ENCODE measurements at regions of chr20 and their contacts with region 1.

Region 1: DNA sequence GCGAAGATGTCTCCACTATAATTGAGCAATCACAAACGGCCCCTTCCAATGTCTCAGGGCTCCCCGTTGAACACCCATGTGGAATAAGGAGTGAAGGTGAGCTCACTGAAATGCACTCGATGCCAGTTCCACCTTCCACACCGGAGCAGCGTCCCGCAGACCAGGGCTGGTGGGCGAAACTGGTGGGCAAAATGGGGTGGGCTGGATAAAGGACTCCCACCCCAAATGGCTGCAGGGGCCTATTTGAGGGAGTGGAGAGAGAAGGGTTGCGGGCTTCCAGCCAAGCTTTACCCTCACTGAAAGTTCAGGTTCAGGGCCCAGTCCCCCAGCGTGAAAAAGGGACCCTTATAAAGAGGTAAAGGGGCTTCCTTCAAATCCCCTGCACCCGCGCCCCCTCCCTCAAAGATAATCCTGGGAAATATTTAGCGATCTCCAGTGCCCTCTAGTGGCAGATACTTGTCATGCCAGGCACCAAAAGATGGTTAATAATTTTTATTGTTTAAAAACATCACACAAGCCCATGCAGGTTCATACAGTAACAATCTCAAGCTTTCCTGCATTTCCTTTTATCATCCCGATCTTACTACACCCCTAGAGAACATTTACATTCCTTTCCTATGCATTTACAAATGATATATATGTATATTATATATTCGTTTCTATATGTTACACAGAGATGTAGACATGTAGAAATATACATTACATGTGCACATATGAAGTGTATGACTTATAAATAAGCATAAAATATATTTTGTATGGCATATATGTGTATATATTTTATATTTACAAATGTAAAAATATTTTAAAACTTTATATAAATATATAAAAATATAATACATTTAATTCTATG is 58.2 kb upstream of the NKX2-2 start:
- DNase-seq: peak in 2 of 5 donors; percentile 15 to 26
- H3K4me3 ChIP-seq: no peak overlapping the region
- H3K4me3 Mint-ChIP-seq: no peak overlapping the region
- H3K27ac ChIP-seq: no peak overlapping the region
- H3K27ac Mint-ChIP-seq: no peak overlapping the region
- H3K4me1 ChIP-seq: peaks cover 15% of the 10 kb centered on the region
- H3K4me1 Mint-ChIP-seq: peaks cover 2 to 13% (median 8%) of the 10 kb centered on the region in 4 donors
- H3K27me3 ChIP-seq: no peaks in the 10 kb centered on the region
- H3K27me3 Mint-ChIP-seq: peaks cover 1 to 10% of the 10 kb centered on the region in 2 donors

Region 2: DNA sequence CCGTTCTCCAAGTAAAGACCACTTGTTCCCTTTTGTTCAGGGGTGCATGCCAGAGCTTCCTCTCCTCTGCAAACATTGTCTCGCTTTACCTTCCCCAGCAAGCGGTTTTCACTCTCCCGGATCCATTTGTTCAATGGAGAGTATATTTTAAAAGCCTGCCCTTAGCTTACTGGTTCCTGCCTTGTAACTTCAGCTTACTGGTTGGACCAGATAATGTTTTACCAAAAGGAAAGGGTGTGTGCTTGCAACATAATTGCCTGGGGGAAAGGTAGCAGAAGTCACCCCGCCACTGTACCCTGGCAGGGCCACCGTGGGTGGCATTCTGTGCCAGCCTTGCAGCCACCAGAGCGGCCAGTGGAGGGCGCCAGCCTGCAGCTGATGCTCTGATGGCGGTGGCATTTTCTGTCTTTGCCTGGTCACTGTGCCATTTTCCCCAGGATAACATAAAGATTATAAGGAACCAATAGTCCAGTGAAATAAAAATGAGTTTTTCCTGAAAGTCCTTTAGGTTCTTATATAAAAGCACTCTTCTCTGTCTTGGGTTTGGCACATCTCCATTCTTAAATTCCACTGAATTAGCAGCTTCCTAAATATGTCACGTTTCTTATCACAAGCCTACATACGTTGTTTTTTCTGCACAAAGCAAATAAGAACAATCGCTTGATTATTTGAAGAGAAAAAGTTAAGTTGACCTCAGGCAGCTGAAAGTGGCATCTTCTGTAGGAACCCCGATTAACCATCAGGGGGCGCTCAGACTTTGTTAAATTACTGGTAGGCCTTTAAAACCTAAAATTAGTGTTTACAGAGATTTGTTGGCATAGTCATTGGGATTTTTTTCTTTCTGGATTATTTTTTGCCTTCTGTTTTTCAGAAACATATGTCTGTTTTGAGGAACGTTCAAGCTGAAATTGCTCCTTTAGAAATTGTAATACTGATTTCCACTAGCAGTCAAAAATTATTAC is 336.3 kb before region 1 on chr20:
- CTCF ChIA-PET with region 1: interaction called, 46 read pairs
- POLR2A ChIA-PET with region 1: no interaction called
- intact Hi-C with region 1: loop called (anchors 1 kb)
- DNase-seq: peak; percentile 57 to 66 (median 62)
- H3K4me3 ChIP-seq: no peak overlapping the region
- H3K4me3 Mint-ChIP-seq: no peak overlapping the region
- H3K27ac ChIP-seq: no peak overlapping the region
- H3K27ac Mint-ChIP-seq: no peak overlapping the region
- H3K4me1 ChIP-seq: peaks cover 4% of the 10 kb centered on the region
- H3K4me1 Mint-ChIP-seq: peaks cover 2 to 4% (median 3%) of the 10 kb centered on the region in 4 donors
- H3K27me3 ChIP-seq: no peaks in the 10 kb centered on the region
- H3K27me3 Mint-ChIP-seq: no peaks in the 10 kb centered on the region

Region 3: DNA sequence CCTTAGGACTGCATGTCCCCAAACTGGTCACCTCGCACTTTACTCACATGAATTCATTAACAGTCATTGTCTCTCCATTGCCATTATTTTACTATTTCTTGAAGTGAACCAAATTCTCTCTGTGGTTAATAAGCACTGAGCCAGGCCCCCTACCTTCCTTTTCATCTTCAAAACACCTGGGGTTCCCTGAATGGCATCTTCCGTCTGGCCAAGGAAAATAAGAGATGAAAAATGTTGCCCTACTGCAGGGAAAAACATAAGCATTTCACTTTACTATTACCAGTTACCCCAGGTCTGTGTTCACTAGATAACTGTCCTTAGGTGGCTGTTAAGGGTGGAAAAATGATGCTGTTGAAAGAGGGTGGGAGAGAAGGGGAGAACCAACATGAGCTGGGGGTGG is 48.2 kb before region 1 on chr20:
- CTCF ChIA-PET with region 1: interaction called, 136 read pairs
- POLR2A ChIA-PET with region 1: interaction called, 3 read pairs
- intact Hi-C with region 1: no loop called
- DNase-seq: no peak
- H3K4me3 ChIP-seq: no peak overlapping the region
- H3K4me3 Mint-ChIP-seq: peak overlapping the region in 3 of 8 donors; percentile 1 to 74 (median 52)
- H3K27ac ChIP-seq: no peak overlapping the region
- H3K27ac Mint-ChIP-seq: peak overlapping the region in 2 of 7 donors; percentile 0 to 62
- H3K4me1 ChIP-seq: peaks cover 26% of the 10 kb centered on the region
- H3K4me1 Mint-ChIP-seq: peaks cover 7 to 34% (median 15%) of the 10 kb centered on the region in 4 donors
- H3K27me3 ChIP-seq: peaks cover 60% of the 10 kb centered on the region
- H3K27me3 Mint-ChIP-seq: peaks cover 56 to 64% of the 10 kb centered on the region in 2 donors

Region 4: GRCh38 chr20:21529863-21530262 is 42.2 kb before region 1 on chr20:
- CTCF ChIA-PET with region 1: interaction called, 136 read pairs
- POLR2A ChIA-PET with region 1: interaction called, 13 read pairs
- intact Hi-C with region 1: loop called (anchors 1 kb)
- DNase-seq: no peak
- H3K4me3 ChIP-seq: no peak overlapping the region
- H3K4me3 Mint-ChIP-seq: no peak overlapping the region
- H3K27ac ChIP-seq: no peak overlapping the region
- H3K27ac Mint-ChIP-seq: peak overlapping the region in 1 of 7 donors; percentile 49
- H3K4me1 ChIP-seq: no peaks in the 10 kb centered on the region
- H3K4me1 Mint-ChIP-seq: peaks cover 0 to 5% (median 3%) of the 10 kb centered on the region in 4 donors
- H3K27me3 ChIP-seq: peaks cover 13% of the 10 kb centered on the region
- H3K27me3 Mint-ChIP-seq: peaks cover 18 to 35% of the 10 kb centered on the region in 2 donors

Region 5: GRCh38 chr20:21548390-21549035 is 23.6 kb before region 1 on chr20:
- CTCF ChIA-PET with region 1: interaction called, 83 read pairs
- POLR2A ChIA-PET with region 1: interaction called, 8 read pairs
- intact Hi-C with region 1: loop called (anchors 1 kb)
- DNase-seq: peak; percentile 74 to 86 (median 80)
- H3K4me3 ChIP-seq: peak overlapping the region; percentile 10 to 32
- H3K4me3 Mint-ChIP-seq: peak overlapping the region; percentile 74 to 88 (median 80)
- H3K27ac ChIP-seq: peak overlapping the region; percentile 43
- H3K27ac Mint-ChIP-seq: peak overlapping the region; percentile 84 to 97 (median 95)
- H3K4me1 ChIP-seq: peaks cover 44% of the 10 kb centered on the region
- H3K4me1 Mint-ChIP-seq: peaks cover 22 to 41% (median 32%) of the 10 kb centered on the region in 4 donors
- H3K27me3 ChIP-seq: no peaks in the 10 kb centered on the region
- H3K27me3 Mint-ChIP-seq: no peaks in the 10 kb centered on the region

Measured in CD4-positive, alpha-beta memory T cell (primary cell).